Activated naive CD4-positive, alpha-beta T cell treated with anti-CD3 and anti-CD28 coated beads for 36 hours (primary cell): ENCODE measurements at regions of chr16 and their contacts with region 1.

Region 1: DNA sequence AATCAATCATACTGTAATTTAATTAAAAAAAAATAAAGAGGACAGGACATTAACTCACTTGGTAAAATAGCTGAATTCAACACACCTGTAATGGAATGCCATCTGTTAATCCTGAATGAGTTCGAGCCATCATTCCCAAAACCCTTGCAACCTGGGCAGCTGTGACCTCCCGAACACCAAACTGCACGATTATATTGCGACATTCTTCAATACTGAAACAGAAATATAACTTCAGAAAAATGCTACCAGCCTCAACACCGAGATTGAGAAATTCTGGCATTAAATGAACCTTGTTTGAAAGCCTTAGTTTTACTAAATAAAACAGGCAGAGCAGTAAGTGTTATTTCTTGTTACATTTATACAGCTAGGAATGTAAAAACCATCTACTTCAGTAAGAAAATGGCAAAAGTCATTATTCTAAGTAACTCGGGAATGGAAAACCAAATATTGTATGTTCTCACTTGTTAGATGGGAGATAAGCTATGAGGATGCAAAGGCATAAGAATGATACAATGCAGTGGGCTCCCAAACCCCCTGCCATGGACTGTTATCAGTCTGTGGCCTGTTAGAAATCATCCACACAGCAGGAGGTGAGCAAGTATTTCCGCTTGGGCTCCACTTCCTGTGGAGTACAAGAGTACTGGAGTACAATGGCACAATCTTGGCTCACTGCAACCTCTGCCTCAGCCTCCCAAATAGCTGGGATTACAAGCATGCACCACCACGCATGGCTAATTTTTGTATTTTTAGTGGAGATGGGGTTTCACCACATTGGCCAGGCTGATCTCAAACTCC is 46.5 kb downstream of the CNOT1 start:
- DNase-seq: peak; percentile 12
- H3K4me3 Mint-ChIP-seq: no peak overlapping the region
- H3K27ac Mint-ChIP-seq: no peak overlapping the region
- H3K4me1 Mint-ChIP-seq: peaks cover 11% of the 10 kb centered on the region
- H3K27me3 Mint-ChIP-seq: no peaks in the 10 kb centered on the region

Region 2: GRCh38 chr16:58418601-58419000 is 164.6 kb before region 1 on chr16:
- CTCF ChIA-PET with region 1: no interaction called
- intact Hi-C with region 1: no loop called
- DNase-seq: no peak
- H3K4me3 Mint-ChIP-seq: no peak overlapping the region
- H3K27ac Mint-ChIP-seq: no peak overlapping the region
- H3K4me1 Mint-ChIP-seq: no peaks in the 10 kb centered on the region
- H3K27me3 Mint-ChIP-seq: peaks cover 4% of the 10 kb centered on the region

Region 3: DNA sequence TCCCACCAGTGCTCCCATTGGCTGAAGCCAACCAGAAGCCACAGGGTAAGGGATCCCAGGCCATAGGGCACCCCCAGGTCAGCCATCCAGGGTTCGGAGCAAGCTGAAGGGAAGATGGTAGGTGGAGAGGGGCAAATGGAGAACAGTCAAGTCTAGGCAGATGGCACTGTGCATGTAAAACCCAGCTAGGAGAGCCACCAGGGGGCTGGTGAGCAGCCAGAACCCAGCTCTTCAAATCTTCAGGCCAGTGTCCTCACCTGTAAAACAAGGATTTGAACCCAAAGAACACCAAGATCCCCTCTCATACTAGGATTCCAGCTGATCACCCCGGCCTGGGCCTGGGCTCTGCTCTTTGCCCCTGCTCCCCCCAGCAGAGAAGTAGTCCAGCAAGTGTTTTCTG is 147.4 kb before region 1 on chr16:
- CTCF ChIA-PET with region 1: no interaction called
- intact Hi-C with region 1: no loop called
- DNase-seq: no peak
- H3K4me3 Mint-ChIP-seq: no peak overlapping the region
- H3K27ac Mint-ChIP-seq: no peak overlapping the region
- H3K4me1 Mint-ChIP-seq: no peaks in the 10 kb centered on the region
- H3K27me3 Mint-ChIP-seq: no peaks in the 10 kb centered on the region

Region 4: GRCh38 chr16:58533751-58534470 is 49.3 kb before region 1 on chr16:
- CTCF ChIA-PET with region 1: no interaction called
- intact Hi-C with region 1: loop called (anchors 10 kb)
- DNase-seq: no peak
- H3K4me3 Mint-ChIP-seq: no peak overlapping the region
- H3K27ac Mint-ChIP-seq: no peak overlapping the region
- H3K4me1 Mint-ChIP-seq: no peaks in the 10 kb centered on the region
- H3K27me3 Mint-ChIP-seq: no peaks in the 10 kb centered on the region